Natural killer cell (primary cell): ENCODE measurements at regions of chr12 and their contacts with region 1.

Region 1: DNA sequence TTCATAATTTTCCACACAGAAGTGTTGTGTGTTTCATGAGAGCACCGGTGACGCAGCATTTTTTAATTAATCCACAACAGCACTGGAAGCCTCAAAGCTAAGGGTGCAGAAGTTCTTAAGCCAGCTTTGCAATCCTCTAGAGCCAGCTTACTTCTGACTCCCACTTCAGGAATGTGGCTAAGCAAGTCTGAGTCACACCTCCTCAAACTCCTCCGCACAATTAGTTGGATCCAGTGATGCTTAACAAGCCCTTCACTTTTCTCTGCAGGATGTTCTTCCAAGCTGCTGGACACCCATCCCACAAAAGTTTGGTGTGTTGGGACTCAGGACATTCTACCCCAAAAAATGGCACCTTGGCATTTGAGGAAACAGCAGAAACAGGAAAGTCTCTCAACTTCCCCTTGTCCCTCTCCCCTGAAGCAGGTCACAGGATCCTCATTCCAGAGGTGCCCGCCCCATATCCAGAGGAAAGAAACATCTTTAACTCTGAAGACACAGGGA is 210.0 kb downstream of the PPM1H start:
- DNase-seq: no peak
- ATAC-seq: no peak
- H3K4me3 ChIP-seq: no peak overlapping the region
- H3K4me3 Mint-ChIP-seq: no peak overlapping the region
- H3K27ac ChIP-seq: no peak overlapping the region
- H3K27ac Mint-ChIP-seq: no peak overlapping the region
- H3K4me1 ChIP-seq: no peaks in the 10 kb centered on the region
- H3K4me1 Mint-ChIP-seq: no peaks in the 10 kb centered on the region
- H3K27me3 ChIP-seq: no peaks in the 10 kb centered on the region
- H3K27me3 Mint-ChIP-seq: peaks cover 1 to 3% of the 10 kb centered on the region in 2 donors
- CTCF ChIP-seq: no peak

Region 2: GRCh38 chr12:62543753-62544152 is 181.2 kb before region 1 on chr12:
- intact Hi-C with region 1: no loop called
- DNase-seq: no peak
- ATAC-seq: no peak
- H3K4me3 ChIP-seq: no peak overlapping the region
- H3K4me3 Mint-ChIP-seq: no peak overlapping the region
- H3K27ac ChIP-seq: no peak overlapping the region
- H3K27ac Mint-ChIP-seq: no peak overlapping the region
- H3K4me1 ChIP-seq: no peaks in the 10 kb centered on the region
- H3K4me1 Mint-ChIP-seq: no peaks in the 10 kb centered on the region
- H3K27me3 ChIP-seq: no peaks in the 10 kb centered on the region
- H3K27me3 Mint-ChIP-seq: no peaks in the 10 kb centered on the region
- CTCF ChIP-seq: no peak

Region 3: GRCh38 chr12:62693376-62694050 is 31.5 kb before region 1 on chr12:
- intact Hi-C with region 1: loop called (anchors 2 kb)
- DNase-seq: no peak
- ATAC-seq: no peak
- H3K4me3 ChIP-seq: no peak overlapping the region
- H3K4me3 Mint-ChIP-seq: no peak overlapping the region
- H3K27ac ChIP-seq: no peak overlapping the region
- H3K27ac Mint-ChIP-seq: no peak overlapping the region
- H3K4me1 ChIP-seq: no peaks in the 10 kb centered on the region
- H3K4me1 Mint-ChIP-seq: no peaks in the 10 kb centered on the region
- H3K27me3 ChIP-seq: no peaks in the 10 kb centered on the region
- H3K27me3 Mint-ChIP-seq: no peaks in the 10 kb centered on the region
- CTCF ChIP-seq: no peak